ENCODE measurements at regions of chr1 and their contacts with region 1.

Region 1: GRCh38 chr1:35769759-35770446 is at the start of gene CLSPN:
- DNase-seq: peak; percentile 88
- ATAC-seq: peak; percentile 94
- H3K4me3 Mint-ChIP-seq: peak within 1 kb of the TSS; percentile 99
- H3K27ac Mint-ChIP-seq: peak within 1 kb of the TSS; percentile 83
- H3K4me1 Mint-ChIP-seq: peaks cover 11% of the 10 kb centered on the region
- H3K27me3 Mint-ChIP-seq: no peaks in the 10 kb centered on the region
- CTCF ChIP-seq: no peak
- total RNA-seq, gene CLSPN: 3.9 and 4.9 TPM in 2 replicates

Region 2: GRCh38 chr1:35202048-35202719 is 567.7 kb before region 1 on chr1:
- CTCF ChIA-PET with region 1: no interaction called
- POLR2A ChIA-PET with region 1: no interaction called
- intact Hi-C with region 1: loop called (anchors 1 kb)
- DNase-seq: peak; percentile 30
- ATAC-seq: peak; percentile 100
- H3K4me3 Mint-ChIP-seq: no peak overlapping the region
- H3K27ac Mint-ChIP-seq: no peak overlapping the region
- H3K4me1 Mint-ChIP-seq: peaks cover 5% of the 10 kb centered on the region
- H3K27me3 Mint-ChIP-seq: no peaks in the 10 kb centered on the region
- CTCF ChIP-seq: peak; percentile 58

Region 3: GRCh38 chr1:35564037-35564883 is 205.6 kb before region 1 on chr1:
- CTCF ChIA-PET with region 1: interaction called, 15 read pairs
- POLR2A ChIA-PET with region 1: interaction called, 3 read pairs
- intact Hi-C with region 1: loop called (anchors 1 kb)
- DNase-seq: peak; percentile 60
- ATAC-seq: peak; percentile 82
- H3K4me3 Mint-ChIP-seq: no peak overlapping the region
- H3K27ac Mint-ChIP-seq: no peak overlapping the region
- H3K4me1 Mint-ChIP-seq: peaks cover 4% of the 10 kb centered on the region
- H3K27me3 Mint-ChIP-seq: no peaks in the 10 kb centered on the region
- CTCF ChIP-seq: peak; percentile 55

Region 4: DNA sequence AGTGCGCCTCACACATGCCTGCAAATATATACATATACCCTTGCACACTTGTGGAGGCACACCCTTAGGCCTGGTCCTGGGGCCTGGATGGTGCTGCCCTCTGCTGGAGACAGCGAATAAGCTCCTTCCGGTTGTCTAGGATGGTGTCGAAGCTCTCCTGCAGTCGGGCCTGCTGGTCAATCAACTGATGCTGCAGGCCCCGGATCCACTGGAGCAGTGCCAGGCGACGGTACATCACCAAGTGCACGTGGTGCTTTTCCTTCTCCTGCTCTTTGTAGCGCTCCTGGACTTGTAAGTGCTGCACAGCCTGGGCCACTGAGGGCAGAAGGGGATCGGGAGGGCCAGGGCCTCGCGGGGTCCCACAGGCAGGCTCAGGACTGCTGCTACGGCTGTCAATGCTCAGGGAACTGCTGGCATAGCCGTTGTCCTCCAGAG is 54.3 kb before region 1 on chr1:
- CTCF ChIA-PET with region 1: interaction called, 5 read pairs
- POLR2A ChIA-PET with region 1: interaction called, 4 read pairs
- intact Hi-C with region 1: loop called (anchors 2 kb)
- DNase-seq: peak; percentile 56
- ATAC-seq: peak; percentile 67
- H3K4me3 Mint-ChIP-seq: peak overlapping the region; percentile 32
- H3K27ac Mint-ChIP-seq: no peak overlapping the region
- H3K4me1 Mint-ChIP-seq: peaks cover 28% of the 10 kb centered on the region
- H3K27me3 Mint-ChIP-seq: no peaks in the 10 kb centered on the region
- CTCF ChIP-seq: no peak

Region 5: DNA sequence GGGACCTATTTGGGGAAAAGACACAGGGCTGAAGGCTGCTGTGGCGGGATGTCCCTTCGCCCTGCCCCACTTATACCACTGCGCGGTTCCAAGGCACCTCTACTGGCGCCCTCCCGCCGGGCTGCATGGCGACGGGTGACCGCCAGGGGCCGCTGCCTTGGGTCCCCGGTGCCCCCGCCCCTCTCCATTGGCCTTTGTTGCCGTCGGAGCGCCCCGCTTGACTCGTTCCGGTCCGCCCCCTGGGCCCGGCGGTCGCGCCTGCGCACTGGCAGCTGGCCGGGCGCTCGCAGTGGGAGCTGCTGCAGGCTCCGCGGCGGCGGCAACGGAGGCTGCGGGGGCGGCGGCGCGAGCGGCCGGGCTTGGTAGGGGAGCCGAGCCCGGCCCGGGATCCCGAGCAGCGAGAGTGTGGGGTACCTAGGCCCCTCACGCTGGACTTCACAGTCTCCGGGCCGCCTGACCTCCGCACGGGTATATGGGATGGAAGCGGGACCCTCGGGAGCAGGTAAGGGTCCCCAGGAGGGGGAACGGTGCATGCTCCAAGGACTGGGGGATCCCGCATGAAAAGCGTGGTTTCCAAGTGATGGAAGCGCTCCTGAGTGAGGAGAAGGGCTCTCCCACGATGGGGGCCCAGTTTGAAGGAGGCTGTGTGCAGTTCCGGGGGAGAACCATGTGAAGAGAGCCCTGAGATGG is 113.2 kb after region 1 on chr1 and contains the start of gene AGO1:
- CTCF ChIA-PET with region 1: no interaction called
- POLR2A ChIA-PET with region 1: no interaction called
- intact Hi-C with region 1: loop called (anchors 1 kb)
- DNase-seq: peak; percentile 98
- ATAC-seq: peak; percentile 96
- H3K4me3 Mint-ChIP-seq: peak within 1 kb of the TSS; percentile 95
- H3K27ac Mint-ChIP-seq: peak within 1 kb of the TSS; percentile 80
- H3K4me1 Mint-ChIP-seq: peaks cover 47% of the 10 kb centered on the region
- H3K27me3 Mint-ChIP-seq: peaks cover 4% of the 10 kb centered on the region
- CTCF ChIP-seq: peak; percentile 52
- total RNA-seq, gene AGO1: 30.3 and 34.3 TPM in 2 replicates

Measured in activated B cell treated with CpG ODN at 0.5 μM for 24 hours (primary cell).